Thyroid gland (tissue), 4 donors: ENCODE measurements at regions of chr2 and their contacts with region 1.

Region 1: GRCh38 chr2:176814306-176815052 is 398.1 kb upstream of the HNRNPA3 start:
- DNase-seq: peak in 1 of 2 donors; percentile 5
- H3K4me3 ChIP-seq: no peak overlapping the region
- H3K27ac ChIP-seq: peak overlapping the region in 1 of 3 donors; percentile 55
- H3K4me1 ChIP-seq: peaks cover 8 to 10% of the 10 kb centered on the region in 2 donors
- H3K27me3 ChIP-seq: no peaks in the 10 kb centered on the region
- CTCF ChIP-seq: peak in 5 of 6 experiments; percentile 21 to 75 (median 61)
- POLR2A ChIP-seq: no peak

Region 2: GRCh38 chr2:176178038-176178756 is 636.3 kb before region 1 on chr2:
- intact Hi-C with region 1: no loop called
- DNase-seq: no peak
- H3K4me3 ChIP-seq: peak overlapping the region in 1 of 3 donors; percentile 12
- H3K27ac ChIP-seq: no peak overlapping the region
- H3K4me1 ChIP-seq: peaks cover 7 to 8% of the 10 kb centered on the region in 2 donors
- H3K27me3 ChIP-seq: peaks cover 42% of the 10 kb centered on the region
- CTCF ChIP-seq: no peak
- POLR2A ChIP-seq: no peak

Region 3: GRCh38 chr2:176643646-176644045 is 170.8 kb before region 1 on chr2:
- intact Hi-C with region 1: loop called (anchors 10 kb)
- DNase-seq: peak in 1 of 2 donors; percentile 15
- H3K4me3 ChIP-seq: no peak overlapping the region
- H3K27ac ChIP-seq: no peak overlapping the region
- H3K4me1 ChIP-seq: no peaks in the 10 kb centered on the region
- H3K27me3 ChIP-seq: no peaks in the 10 kb centered on the region
- CTCF ChIP-seq: no peak
- POLR2A ChIP-seq: no peak

Region 4: DNA sequence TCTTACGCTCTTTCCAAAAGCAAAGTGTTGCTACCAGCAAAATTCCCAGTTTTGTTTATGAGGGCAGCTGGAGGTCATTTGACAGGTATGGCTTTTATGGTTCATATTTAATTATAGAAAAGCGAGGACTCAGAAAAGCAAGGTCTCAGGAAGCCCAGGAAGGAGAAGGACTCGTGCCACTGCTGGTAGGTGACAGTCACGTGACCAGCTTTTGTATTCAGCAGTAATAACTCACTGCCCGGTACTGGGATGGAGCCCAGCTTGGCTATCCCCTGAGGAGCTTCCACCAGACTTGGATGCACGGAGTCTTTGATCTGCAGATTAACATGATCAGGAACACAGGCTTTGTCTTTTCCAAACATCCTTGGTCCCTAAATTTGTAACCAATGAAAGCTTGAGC is 146.2 kb after region 1 on chr2:
- intact Hi-C with region 1: no loop called
- DNase-seq: peak in 1 of 2 donors; percentile 2
- H3K4me3 ChIP-seq: no peak overlapping the region
- H3K27ac ChIP-seq: no peak overlapping the region
- H3K4me1 ChIP-seq: no peaks in the 10 kb centered on the region
- H3K27me3 ChIP-seq: no peaks in the 10 kb centered on the region
- CTCF ChIP-seq: no peak
- POLR2A ChIP-seq: no peak

Region 5: DNA sequence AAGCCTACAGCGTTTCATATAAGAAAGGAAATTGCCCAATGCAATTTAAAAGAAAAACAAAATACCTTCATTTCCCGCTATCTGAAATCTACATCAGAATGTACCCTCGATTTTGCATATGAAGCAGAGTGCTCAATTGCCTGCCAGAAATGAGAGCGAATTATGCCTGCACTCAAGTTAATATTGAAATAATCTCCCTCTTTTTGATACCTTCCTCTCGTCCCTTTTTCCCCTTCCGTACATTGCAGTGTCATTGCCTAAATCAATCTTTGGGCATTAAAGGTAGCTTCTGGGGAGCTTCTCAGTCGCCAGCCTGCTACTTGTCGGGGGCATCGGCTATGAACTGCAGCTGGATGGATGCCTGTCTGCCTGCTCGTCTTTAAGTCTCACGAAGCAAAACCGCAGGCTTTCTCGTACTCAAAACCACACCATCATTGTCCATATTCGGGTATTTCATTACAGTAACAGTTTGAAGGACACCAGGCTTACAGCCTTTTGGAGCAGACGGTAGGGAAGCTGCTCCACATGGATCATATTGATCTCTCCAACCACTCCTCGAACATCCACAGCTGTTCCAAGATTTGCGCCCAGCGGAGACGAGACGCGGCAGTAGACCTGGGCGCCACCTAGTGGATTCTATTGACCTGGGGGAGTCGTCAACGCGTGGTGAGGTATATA is 334.1 kb after region 1 on chr2:
- intact Hi-C with region 1: loop called (anchors 10 kb)
- DNase-seq: peak; percentile 67 to 75
- H3K4me3 ChIP-seq: peak overlapping the region in 1 of 3 donors; percentile 11
- H3K27ac ChIP-seq: no peak overlapping the region
- H3K4me1 ChIP-seq: peaks cover 0 to 5% of the 10 kb centered on the region in 2 donors
- H3K27me3 ChIP-seq: no peaks in the 10 kb centered on the region
- CTCF ChIP-seq: peak; percentile 50 to 83 (median 70)
- POLR2A ChIP-seq: peak in 1 of 2 donors; percentile 5